ENCODE measurements at regions of chr3 and their contacts with region 1.

Region 1: DNA sequence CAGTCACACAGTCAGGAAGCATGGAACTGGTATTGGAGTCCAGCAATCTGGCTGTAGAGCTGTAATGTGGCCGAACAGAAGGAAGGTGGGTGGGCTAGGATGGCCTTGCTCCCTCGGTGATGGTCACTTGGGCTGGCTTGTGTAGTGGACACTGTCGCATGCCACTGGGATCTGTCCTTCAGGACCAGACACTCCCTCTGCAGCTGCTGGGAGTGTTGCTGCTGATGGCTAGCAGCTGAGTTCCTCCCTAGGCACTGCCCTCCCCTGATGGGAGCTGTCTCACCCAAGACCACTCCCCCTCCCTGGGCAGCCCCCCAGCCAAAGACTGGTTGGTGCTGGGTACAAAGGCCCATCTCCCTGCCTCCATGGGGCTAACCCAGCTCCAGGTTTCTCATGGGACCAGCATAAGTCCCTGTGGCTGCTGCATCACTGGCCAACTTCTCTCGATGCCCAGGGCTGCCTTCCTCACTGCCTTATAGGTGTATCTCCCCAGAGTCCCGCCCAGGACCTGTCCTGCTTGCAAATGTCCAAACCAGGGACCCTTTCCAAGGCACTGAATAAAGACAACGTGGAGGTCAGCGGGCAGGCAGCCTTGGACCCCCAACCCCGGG is 48.4 kb downstream of the WNT7A start:
- DNase-seq: no peak
- H3K4me3 ChIP-seq: no peak overlapping the region
- H3K27ac ChIP-seq: no peak overlapping the region
- H3K4me1 ChIP-seq: peaks cover 5% of the 10 kb centered on the region
- H3K27me3 ChIP-seq: no peaks in the 10 kb centered on the region
- CTCF ChIP-seq: no peak

Region 2: GRCh38 chr3:13301286-13301987 is 530.1 kb before region 1 on chr3:
- CTCF ChIA-PET with region 1: no interaction called
- dilution Hi-C with region 1: no loop called
- in situ Hi-C with region 1: no loop called
- intact Hi-C with region 1: no loop called
- DNase-seq: peak; percentile 64
- H3K4me3 ChIP-seq: no peak overlapping the region
- H3K27ac ChIP-seq: no peak overlapping the region
- H3K4me1 ChIP-seq: peaks cover 8% of the 10 kb centered on the region
- H3K27me3 ChIP-seq: no peaks in the 10 kb centered on the region
- CTCF ChIP-seq: no peak

Region 3: DNA sequence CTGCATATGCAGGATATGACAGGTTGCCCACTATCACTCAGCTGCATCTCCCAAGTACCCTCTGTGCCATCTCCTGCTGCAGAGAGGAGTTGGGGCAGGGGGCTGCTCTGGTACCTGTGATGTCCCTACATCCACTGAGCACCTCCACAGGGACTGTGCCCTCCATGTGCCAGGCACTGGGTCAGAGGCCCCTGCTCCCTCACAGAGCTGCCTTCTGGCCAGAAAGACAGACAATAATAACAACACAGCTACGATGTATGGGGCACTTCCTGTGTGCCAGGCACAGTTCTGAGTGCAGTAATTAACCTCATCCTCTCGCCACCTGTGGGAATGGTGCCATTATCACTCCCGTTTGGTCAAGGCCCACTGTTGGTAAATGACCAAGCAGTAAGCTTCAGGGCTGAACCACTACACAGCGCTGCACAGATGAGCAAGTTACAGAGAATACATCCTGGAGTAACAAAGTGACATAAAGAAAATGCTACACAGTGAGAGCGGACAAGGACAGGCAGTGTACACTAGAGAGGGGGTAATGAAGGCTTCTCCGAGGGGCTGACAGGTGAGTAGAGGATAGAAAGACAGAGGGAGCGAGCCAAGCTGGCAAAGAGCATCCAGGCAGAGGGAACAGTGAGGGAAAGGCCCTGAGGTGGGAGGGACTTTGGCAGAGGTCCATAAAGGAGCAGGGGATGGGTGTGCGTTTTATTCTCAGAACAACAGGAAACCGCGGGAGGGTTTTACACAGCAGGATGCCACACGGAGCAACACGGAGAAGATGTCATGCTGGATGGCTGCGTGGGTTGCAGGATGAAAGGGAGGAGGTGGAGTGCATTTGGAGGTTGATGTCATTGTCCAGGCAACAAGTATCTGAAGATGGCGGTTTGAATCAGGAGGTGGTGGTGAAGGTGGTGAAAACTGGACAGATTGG is 34.8 kb after region 1 on chr3:
- CTCF ChIA-PET with region 1: no interaction called
- dilution Hi-C with region 1: loop called (anchors 5 kb)
- in situ Hi-C with region 1: no loop called
- intact Hi-C with region 1: no loop called
- DNase-seq: no peak
- H3K4me3 ChIP-seq: no peak overlapping the region
- H3K27ac ChIP-seq: no peak overlapping the region
- H3K4me1 ChIP-seq: peaks cover 13% of the 10 kb centered on the region
- H3K27me3 ChIP-seq: no peaks in the 10 kb centered on the region
- CTCF ChIP-seq: no peak